ENCODE measurements at regions of chr16 and their contacts with region 1.

Region 1: GRCh38 chr16:20166531-20167235 is 93.0 kb upstream of the GPR139 start:
- DNase-seq: no peak
- ATAC-seq: no peak
- H3K4me3 ChIP-seq: no peak overlapping the region
- H3K27ac ChIP-seq: no peak overlapping the region
- H3K4me1 ChIP-seq: no peaks in the 10 kb centered on the region
- H3K27me3 ChIP-seq: no peaks in the 10 kb centered on the region
- CTCF ChIP-seq: no peak
- POLR2A ChIP-seq: no peak

Region 2: DNA sequence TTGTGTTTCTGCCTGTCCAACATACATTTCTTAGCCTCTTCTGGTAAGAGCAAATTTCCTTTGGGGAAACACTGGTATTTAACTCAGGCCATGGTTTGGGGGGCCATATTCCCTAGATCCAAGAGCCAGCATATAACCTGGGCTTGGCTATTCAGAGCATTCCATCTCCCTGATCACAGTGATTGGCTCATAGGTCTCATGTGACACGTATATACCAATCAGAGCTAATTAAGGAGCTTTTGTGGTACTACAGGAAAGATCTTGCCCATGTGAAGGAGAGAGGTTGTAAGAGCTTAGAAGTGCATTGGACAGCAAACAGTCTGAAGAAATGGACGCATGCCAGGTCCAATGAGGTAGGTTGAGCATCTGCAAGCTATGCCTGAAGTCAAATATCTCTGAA is 59.6 kb before region 1 on chr16:
- in situ Hi-C with region 1: no loop called
- intact Hi-C with region 1: no loop called
- DNase-seq: no peak
- ATAC-seq: no peak
- H3K4me3 ChIP-seq: no peak overlapping the region
- H3K27ac ChIP-seq: no peak overlapping the region
- H3K4me1 ChIP-seq: no peaks in the 10 kb centered on the region
- H3K27me3 ChIP-seq: no peaks in the 10 kb centered on the region
- CTCF ChIP-seq: no peak
- POLR2A ChIP-seq: no peak

Region 3: GRCh38 chr16:20243731-20244281 is 77.1 kb after region 1 on chr16:
- in situ Hi-C with region 1: no loop called
- intact Hi-C with region 1: no loop called
- DNase-seq: no peak
- ATAC-seq: no peak
- H3K4me3 ChIP-seq: no peak overlapping the region
- H3K27ac ChIP-seq: no peak overlapping the region
- H3K4me1 ChIP-seq: no peaks in the 10 kb centered on the region
- H3K27me3 ChIP-seq: no peaks in the 10 kb centered on the region
- CTCF ChIP-seq: no peak
- POLR2A ChIP-seq: no peak

Region 4: GRCh38 chr16:20271893-20272292 is 105.2 kb after region 1 on chr16:
- in situ Hi-C with region 1: loop called in 1 of 4 experiments (anchors 25 kb)
- intact Hi-C with region 1: no loop called
- DNase-seq: no peak
- ATAC-seq: no peak
- H3K4me3 ChIP-seq: no peak overlapping the region
- H3K27ac ChIP-seq: no peak overlapping the region
- H3K4me1 ChIP-seq: no peaks in the 10 kb centered on the region
- H3K27me3 ChIP-seq: no peaks in the 10 kb centered on the region
- CTCF ChIP-seq: no peak
- POLR2A ChIP-seq: no peak